Uterus (tissue), 4 donors: ENCODE measurements at regions of chr17 and their contacts with region 1.

Region 1: DNA sequence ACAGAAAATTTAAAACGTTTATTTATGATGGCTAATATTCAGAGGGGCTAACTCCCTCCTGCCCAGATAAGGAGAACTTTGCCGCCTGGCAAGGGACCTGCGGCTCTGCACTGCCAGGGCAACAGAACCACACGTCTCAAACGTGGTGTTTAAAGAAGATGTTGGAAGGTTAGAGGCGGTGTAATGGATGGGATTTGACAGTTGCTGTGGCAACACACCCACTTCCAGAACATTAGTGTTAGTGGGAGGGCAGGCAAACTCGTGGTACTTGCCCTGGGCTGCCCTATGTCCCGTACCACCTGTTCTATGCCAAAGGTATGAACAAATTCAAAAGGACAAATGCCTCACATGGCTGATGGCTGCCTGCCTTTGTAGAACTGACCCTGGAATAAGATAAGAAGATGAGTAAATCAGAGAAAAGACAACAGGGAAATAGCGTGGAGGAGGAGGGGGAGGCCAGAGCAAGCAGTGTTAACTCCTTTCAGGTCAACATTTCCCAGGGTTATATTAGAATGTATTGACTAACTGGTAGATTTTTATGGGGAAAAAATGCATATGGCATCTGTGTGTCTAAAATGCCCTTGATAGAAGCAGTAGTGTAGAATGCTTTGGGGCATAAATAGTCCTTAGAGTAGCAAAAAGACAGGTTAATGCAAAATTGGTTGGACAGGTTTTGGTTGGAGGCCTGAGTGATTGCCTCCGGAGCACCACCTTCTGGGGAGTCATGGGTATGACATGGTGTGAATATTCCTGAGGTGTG is 30.8 kb downstream of the HLF start:
- DNase-seq: peak; percentile 60 to 61
- H3K4me3 ChIP-seq: no peak overlapping the region
- H3K27ac ChIP-seq: peak overlapping the region; percentile 2 to 9
- H3K4me1 ChIP-seq: peaks cover 0 to 6% of the 10 kb centered on the region in 2 donors
- H3K27me3 ChIP-seq: no peaks in the 10 kb centered on the region
- CTCF ChIP-seq: peak; percentile 77 to 87 (median 80)
- POLR2A ChIP-seq: no peak

Region 2: GRCh38 chr17:55242476-55242875 is 53.1 kb before region 1 on chr17:
- intact Hi-C with region 1: loop called (anchors 10 kb)
- DNase-seq: no peak
- H3K4me3 ChIP-seq: no peak overlapping the region
- H3K27ac ChIP-seq: no peak overlapping the region
- H3K4me1 ChIP-seq: no peaks in the 10 kb centered on the region
- H3K27me3 ChIP-seq: no peaks in the 10 kb centered on the region
- CTCF ChIP-seq: no peak
- POLR2A ChIP-seq: no peak